Posterior cingulate gyrus (tissue), 11 donors: ENCODE measurements at regions of chr5 and their contacts with region 1.

Region 1: DNA sequence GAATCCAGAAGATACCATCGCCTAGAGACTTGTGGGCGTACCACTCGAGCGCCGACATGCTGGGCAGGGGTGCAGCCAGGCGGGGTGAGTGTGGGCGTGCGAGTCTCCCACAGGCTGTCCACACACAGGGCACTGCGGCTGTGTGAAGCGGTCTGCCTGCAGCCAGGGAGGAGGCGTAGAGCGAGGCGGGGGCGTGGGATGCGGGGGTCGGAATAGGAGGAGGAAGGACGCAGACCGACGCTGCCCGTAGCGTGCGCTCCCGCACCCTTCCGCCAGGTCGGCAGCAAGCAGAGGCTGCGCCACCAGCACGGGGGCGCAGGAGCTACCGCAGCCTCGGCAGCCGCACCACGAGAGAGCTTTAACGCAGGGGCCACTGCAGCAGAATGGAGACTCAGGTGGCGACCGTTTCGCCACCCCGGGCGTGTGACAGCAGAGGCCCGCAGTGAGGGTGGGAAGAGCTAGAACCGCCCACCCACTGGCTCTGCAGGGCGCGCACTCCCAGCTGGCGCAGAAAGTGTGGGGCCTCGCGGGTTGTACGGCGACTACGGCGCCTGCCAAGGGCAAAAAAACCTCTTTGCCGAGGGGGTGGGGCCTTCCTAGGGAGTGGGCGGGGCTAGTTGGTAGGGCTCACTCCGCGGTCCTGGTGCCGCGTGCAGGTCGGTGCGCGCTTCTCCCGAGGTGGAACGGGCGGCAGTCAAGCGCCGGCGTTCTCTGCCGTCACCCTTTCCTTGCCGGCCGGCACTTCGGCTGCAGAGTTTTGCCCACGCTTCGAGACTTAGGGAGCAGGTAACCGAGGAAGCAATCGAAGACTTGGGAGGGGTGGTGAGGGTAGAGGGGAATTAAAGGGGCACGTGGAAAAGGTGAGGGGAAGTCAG is at the starts of genes MBLAC2 and POLR3G:
- DNase-seq: peak; percentile 88 to 98 (median 90)

Region 2: DNA sequence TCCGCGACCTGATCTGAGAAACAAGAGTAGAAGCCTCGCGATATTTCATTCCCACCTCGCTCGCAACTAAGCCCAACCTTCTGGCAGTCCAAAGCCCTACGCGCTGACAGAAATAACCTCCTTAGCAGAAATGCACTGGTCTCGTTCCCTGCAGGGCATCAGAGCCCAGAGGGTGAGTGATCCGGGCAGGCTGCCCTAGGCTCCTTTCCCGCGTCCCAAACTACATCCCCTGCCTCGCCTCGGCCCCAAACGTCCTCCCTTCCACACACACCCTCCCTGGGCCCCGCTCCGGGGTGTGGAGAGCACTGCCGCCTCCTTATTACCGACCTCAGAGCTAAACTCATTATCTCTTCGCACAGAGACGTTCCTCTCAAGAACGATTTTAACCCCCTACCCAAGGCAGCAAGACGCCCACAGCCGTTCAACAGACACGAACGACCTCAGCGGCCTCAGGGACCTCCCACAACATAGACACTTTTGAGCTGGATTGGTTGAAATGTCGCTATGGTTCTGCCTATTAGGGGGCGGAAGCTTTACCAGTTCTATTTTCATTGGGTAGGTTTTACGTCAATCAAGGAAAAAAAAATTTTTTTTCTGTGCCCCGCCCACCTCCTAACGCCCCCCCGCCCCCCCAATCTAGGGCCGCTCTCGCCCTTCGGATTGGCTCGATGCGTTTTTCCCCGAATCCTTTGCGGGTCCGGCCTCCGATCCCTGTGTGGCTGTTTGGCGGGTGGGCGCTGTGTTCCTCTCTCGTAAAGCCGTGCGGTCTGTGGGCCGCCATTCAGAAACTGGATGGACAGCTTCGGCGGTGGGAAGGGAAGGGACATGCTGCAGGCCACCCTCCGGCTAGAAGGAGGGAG is 64.9 kb before region 1 on chr5 and contains the start of gene CETN3:
- intact Hi-C with region 1: loop called (anchors 2 kb)
- DNase-seq: peak; percentile 91 to 99 (median 94)